Body of pancreas (tissue), 4 donors: ENCODE measurements at regions of chr1 and their contacts with region 1.

Region 1: GRCh38 chr1:37793773-37794371 is at the start of gene MANEAL:
- DNase-seq: peak; percentile 51 to 66 (median 56)
- ATAC-seq: peak; percentile 82
- H3K4me3 ChIP-seq: peak within 1 kb of the TSS; percentile 22 to 32
- H3K27ac ChIP-seq: peak within 1 kb of the TSS in 1 of 4 donors; percentile 49
- H3K4me1 ChIP-seq: peaks cover 20% of the 10 kb centered on the region
- H3K27me3 ChIP-seq: no peaks in the 10 kb centered on the region
- CTCF ChIP-seq: peak in 1 of 7 experiments; percentile 6
- POLR2A ChIP-seq: peak in 1 of 3 donors; percentile 21
- total RNA-seq, gene MANEAL: 0.99 to 6.2 TPM

Region 2: DNA sequence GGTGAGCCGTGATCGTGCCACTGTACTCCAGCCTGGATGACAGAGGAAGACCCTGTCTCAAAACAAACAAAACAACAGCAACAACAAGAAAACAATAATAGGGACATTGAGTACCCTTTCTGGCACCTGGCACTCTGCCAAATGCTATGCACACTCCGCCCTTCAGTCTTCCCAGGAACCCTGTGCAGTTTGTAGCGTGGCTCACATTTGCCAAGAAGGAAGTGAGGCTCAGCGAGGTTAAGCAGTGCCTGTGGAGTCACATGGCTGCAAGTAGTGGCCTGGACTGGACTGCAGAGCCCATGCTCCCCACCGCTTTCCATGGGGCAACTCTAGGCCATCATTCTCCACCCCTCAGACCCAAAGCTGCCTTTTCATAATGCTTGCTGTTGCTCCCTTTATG is 1465.2 kb before region 1 on chr1:
- intact Hi-C with region 1: no loop called
- DNase-seq: peak in 1 of 4 donors; percentile 45
- ATAC-seq: no peak
- H3K4me3 ChIP-seq: no peak overlapping the region
- H3K27ac ChIP-seq: no peak overlapping the region
- H3K4me1 ChIP-seq: peaks cover 8% of the 10 kb centered on the region
- H3K27me3 ChIP-seq: no peaks in the 10 kb centered on the region
- CTCF ChIP-seq: no peak
- POLR2A ChIP-seq: no peak

Region 3: GRCh38 chr1:37692078-37692833 is 101.6 kb before region 1 on chr1 and contains the start of gene CDCA8:
- intact Hi-C with region 1: loop called (anchors 10 kb)
- DNase-seq: peak; percentile 97 to 98 (median 98)
- ATAC-seq: peak; percentile 91
- H3K4me3 ChIP-seq: peak within 1 kb of the TSS; percentile 50 to 74
- H3K27ac ChIP-seq: peak within 1 kb of the TSS; percentile 75 to 90 (median 85)
- H3K4me1 ChIP-seq: peaks cover 35% of the 10 kb centered on the region
- H3K27me3 ChIP-seq: no peaks in the 10 kb centered on the region
- CTCF ChIP-seq: peak; percentile 45 to 80 (median 61)
- POLR2A ChIP-seq: peak; percentile 34 to 58 (median 54)
- total RNA-seq, gene CDCA8: not detected

Region 4: GRCh38 chr1:37859507-37860345 is 65.9 kb after region 1 on chr1 and contains the start of gene MTF1:
- intact Hi-C with region 1: loop called (anchors 10 kb)
- DNase-seq: peak; percentile 96 to 97 (median 96)
- ATAC-seq: peak; percentile 98
- H3K4me3 ChIP-seq: peak within 1 kb of the TSS; percentile 64 to 94
- H3K27ac ChIP-seq: peak within 1 kb of the TSS; percentile 85 to 94 (median 92)
- H3K4me1 ChIP-seq: peaks cover 31% of the 10 kb centered on the region
- H3K27me3 ChIP-seq: no peaks in the 10 kb centered on the region
- CTCF ChIP-seq: peak; percentile 80 to 96 (median 91)
- POLR2A ChIP-seq: peak; percentile 45 to 81 (median 75)
- total RNA-seq, gene MTF1: 1.3 to 3.9 TPM